MCF 10A (cell line): ENCODE measurements at regions of chr11 and their contacts with region 1.

Region 1: GRCh38 chr11:8099291-8099899 is 18.4 kb downstream of the TUB start:
- DNase-seq: peak; percentile 75
- H3K4me3 Mint-ChIP-seq: no peak overlapping the region
- H3K27ac Mint-ChIP-seq: no peak overlapping the region
- H3K4me1 Mint-ChIP-seq: no peaks in the 10 kb centered on the region
- H3K27me3 Mint-ChIP-seq: no peaks in the 10 kb centered on the region
- CTCF ChIP-seq: peak; percentile 95

Region 2: GRCh38 chr11:7949934-7950333 is 149.5 kb before region 1 on chr11:
- CTCF ChIA-PET with region 1: no interaction called
- POLR2A ChIA-PET with region 1: no interaction called
- intact Hi-C with region 1: no loop called
- DNase-seq: no peak
- H3K4me3 Mint-ChIP-seq: no peak overlapping the region
- H3K27ac Mint-ChIP-seq: no peak overlapping the region
- H3K4me1 Mint-ChIP-seq: no peaks in the 10 kb centered on the region
- H3K27me3 Mint-ChIP-seq: no peaks in the 10 kb centered on the region
- CTCF ChIP-seq: no peak

Region 3: GRCh38 chr11:7986768-7987559 is 112.4 kb before region 1 on chr11 and contains the start of gene EIF3F:
- CTCF ChIA-PET with region 1: interaction called, 19 read pairs
- POLR2A ChIA-PET with region 1: no interaction called
- intact Hi-C with region 1: no loop called
- DNase-seq: peak; percentile 99
- H3K4me3 Mint-ChIP-seq: peak within 1 kb of the TSS; percentile 92
- H3K27ac Mint-ChIP-seq: peak within 1 kb of the TSS; percentile 82
- H3K4me1 Mint-ChIP-seq: peaks cover 24% of the 10 kb centered on the region
- H3K27me3 Mint-ChIP-seq: no peaks in the 10 kb centered on the region
- CTCF ChIP-seq: peak; percentile 91
- total RNA-seq, gene EIF3F: 255 and 309 TPM in 2 replicates

Region 4: GRCh38 chr11:8025816-8026215 is 73.6 kb before region 1 on chr11:
- CTCF ChIA-PET with region 1: interaction called, 786 read pairs
- POLR2A ChIA-PET with region 1: no interaction called
- intact Hi-C with region 1: no loop called
- DNase-seq: peak; percentile 25
- H3K4me3 Mint-ChIP-seq: no peak overlapping the region
- H3K27ac Mint-ChIP-seq: no peak overlapping the region
- H3K4me1 Mint-ChIP-seq: no peaks in the 10 kb centered on the region
- H3K27me3 Mint-ChIP-seq: peaks cover 21% of the 10 kb centered on the region
- CTCF ChIP-seq: no peak

Region 5: DNA sequence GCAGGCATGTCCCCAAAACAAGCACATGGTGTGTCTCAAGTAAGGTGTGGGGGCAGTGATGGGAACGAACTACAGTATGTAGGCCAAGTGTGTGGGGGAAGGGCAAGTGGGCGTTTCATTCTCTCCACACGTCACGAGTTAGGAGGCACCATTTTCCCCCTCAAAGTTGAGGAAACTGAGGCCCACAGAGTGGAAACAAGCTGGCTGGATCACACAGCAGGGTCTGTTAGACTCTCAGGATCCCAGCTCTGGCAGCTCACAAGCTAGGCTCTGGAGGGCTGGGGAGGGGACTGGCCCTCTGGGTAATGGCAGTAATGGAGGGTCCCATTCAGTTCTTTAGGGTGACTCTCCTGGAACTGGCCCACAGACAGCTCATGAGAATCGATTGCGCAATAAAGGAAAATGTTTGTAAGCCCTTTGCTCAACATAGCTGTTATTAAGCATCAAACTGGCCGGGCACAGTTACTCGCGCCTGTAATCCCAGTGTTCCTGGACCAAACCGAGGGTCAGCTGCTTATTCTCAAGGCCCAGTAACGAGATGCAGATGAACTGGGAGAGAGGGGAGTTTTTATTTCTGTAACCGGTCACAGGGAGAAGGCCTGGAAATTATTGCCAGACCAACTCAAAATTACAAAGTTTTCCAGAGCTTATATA is 42.5 kb before region 1 on chr11:
- CTCF ChIA-PET with region 1: interaction called, 26 read pairs
- POLR2A ChIA-PET with region 1: interaction called, 3 read pairs
- intact Hi-C with region 1: no loop called
- DNase-seq: peak; percentile 39
- H3K4me3 Mint-ChIP-seq: no peak overlapping the region
- H3K27ac Mint-ChIP-seq: no peak overlapping the region
- H3K4me1 Mint-ChIP-seq: peaks cover 8% of the 10 kb centered on the region
- H3K27me3 Mint-ChIP-seq: peaks cover under 1% of the 10 kb centered on the region
- CTCF ChIP-seq: no peak

Region 6: GRCh38 chr11:8111636-8112035 is 12.2 kb after region 1 on chr11:
- CTCF ChIA-PET with region 1: interaction called, 129 read pairs
- POLR2A ChIA-PET with region 1: no interaction called
- intact Hi-C with region 1: no loop called
- DNase-seq: no peak
- H3K4me3 Mint-ChIP-seq: no peak overlapping the region
- H3K27ac Mint-ChIP-seq: no peak overlapping the region
- H3K4me1 Mint-ChIP-seq: no peaks in the 10 kb centered on the region
- H3K27me3 Mint-ChIP-seq: no peaks in the 10 kb centered on the region
- CTCF ChIP-seq: no peak

Region 7: DNA sequence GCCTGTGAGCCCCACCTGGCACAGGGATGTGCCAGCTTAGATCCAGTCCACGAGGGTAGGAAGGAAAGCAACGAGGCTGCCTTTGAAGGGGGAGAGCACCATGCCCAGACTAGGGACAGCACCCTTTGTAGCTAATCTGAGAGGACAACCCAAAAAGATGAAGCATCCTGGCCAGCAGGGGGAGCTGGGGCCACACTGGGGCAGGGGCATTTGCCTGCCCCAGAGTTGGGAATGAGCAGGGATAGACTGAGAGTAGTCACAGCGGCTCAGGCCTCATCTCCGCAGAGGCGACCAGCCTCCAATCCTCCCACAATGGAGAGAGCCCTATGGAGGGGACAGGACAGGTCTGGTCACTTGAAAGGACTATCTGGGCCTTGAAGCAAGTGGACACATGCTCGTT is 147.9 kb after region 1 on chr11:
- CTCF ChIA-PET with region 1: no interaction called
- POLR2A ChIA-PET with region 1: no interaction called
- intact Hi-C with region 1: no loop called
- DNase-seq: peak; percentile 41
- H3K4me3 Mint-ChIP-seq: no peak overlapping the region
- H3K27ac Mint-ChIP-seq: no peak overlapping the region
- H3K4me1 Mint-ChIP-seq: no peaks in the 10 kb centered on the region
- H3K27me3 Mint-ChIP-seq: peaks cover 4% of the 10 kb centered on the region
- CTCF ChIP-seq: peak; percentile 54